ENCODE measurements at regions of chr7 and their contacts with region 1.

Region 1: DNA sequence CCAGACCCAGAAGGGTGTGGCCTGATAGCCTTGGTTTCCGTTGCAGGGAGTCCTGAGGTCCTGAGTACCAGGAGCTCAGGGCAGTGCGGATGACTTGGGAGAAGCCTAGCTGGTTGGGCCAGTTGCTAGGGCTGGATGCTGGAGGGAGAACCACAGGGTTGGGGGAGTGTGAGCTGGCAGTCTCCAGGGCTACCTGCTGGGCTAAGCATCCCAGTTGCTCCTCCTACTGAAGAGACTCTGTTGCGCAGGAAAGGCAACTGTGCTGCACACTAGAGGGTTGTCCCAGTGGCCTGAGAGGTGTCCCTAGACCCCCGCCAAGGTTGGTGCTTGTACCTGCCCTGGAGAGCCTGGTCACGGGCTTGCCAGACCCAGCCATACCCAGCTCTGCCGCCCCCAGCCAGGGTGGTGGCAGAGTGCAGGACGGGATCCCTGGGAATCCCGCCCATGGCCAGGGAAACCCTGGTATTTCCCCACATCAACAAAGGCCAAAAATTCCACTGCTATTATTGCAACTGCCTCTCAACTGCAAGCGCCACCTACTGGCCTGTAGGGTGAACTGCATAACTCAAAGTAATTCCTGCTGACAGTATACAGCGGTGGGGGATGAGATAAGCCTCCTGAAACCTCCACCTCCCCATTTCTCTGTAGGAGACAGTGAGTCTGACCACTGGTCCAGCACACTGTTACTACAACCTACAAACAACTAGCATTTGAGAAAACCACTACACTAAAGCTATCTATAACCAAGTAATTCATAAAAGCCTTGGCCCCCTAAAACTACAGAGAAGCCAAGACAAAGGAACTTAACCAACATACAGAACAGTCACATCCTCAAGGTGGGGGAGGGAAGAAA is 67.6 kb upstream of the DDC start:
- DNase-seq: peak; percentile 74
- H3K4me3 ChIP-seq: no peak overlapping the region; a peak in 1 of 4 replicates
- H3K27ac ChIP-seq: no peak overlapping the region; a peak in 1 of 4 replicates
- H3K4me1 ChIP-seq: peaks cover 0 to 15% of the 10 kb centered on the region in 2 experiments; a peak in 1 of 4 replicates
- H3K27me3 ChIP-seq: no peaks in the 10 kb centered on the region
- CTCF ChIP-seq: peak; percentile 98
- EP300 ChIP-seq: no peak
- RAD21 ChIP-seq: peak; percentile 78

Region 2: DNA sequence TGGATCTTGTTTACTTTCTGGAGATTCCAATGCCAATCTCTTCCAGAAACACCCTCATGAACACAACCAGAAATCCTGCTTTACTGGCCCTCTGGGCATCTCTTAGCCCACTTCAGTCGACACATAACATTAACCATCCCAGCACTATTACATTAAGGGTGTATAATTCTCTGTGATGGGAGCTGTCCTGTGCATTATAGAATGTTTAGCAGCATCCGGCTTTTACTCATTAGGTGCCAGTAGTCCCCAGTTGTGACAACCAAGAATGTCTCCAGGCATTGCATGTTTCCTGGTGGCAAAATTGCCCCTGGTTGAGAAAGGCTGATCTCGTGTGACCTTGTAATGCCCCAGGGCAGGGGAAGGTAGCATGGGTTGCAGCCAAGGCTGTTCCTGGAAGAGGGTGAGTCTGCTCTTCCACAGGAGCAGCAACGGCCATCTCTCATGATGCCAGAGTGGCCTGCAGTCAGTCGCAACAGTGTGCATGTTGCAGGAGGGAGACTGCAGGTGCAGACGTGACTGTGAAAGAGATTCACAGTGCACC is 65.0 kb before region 1 on chr7:
- CTCF ChIA-PET with region 1: interaction called, 10 read pairs
- POLR2A ChIA-PET with region 1: no interaction called
- DNase-seq: peak; percentile 42
- H3K4me3 ChIP-seq: no peak overlapping the region
- H3K27ac ChIP-seq: peak overlapping the region in 1 of 2 experiments; percentile 96; a peak in 2 of 4 replicates
- H3K4me1 ChIP-seq: peaks cover 0 to 41% of the 10 kb centered on the region in 2 experiments; a peak in 2 of 4 replicates
- H3K27me3 ChIP-seq: peaks cover 17% of the 10 kb centered on the region; the same call in 1 of the 2 replicates
- CTCF ChIP-seq: no peak
- EP300 ChIP-seq: peak in 1 of 2 experiments; percentile 80; a peak in 2 of 4 replicates
- RAD21 ChIP-seq: no peak

Region 3: GRCh38 chr7:50595491-50596102 is 37.2 kb before region 1 on chr7:
- CTCF ChIA-PET with region 1: interaction called, 40 read pairs
- POLR2A ChIA-PET with region 1: no interaction called
- DNase-seq: peak; percentile 76
- H3K4me3 ChIP-seq: no peak overlapping the region
- H3K27ac ChIP-seq: no peak overlapping the region
- H3K4me1 ChIP-seq: peaks cover 0 to 19% of the 10 kb centered on the region in 2 experiments; a peak in 1 of 4 replicates
- H3K27me3 ChIP-seq: no peaks in the 10 kb centered on the region
- CTCF ChIP-seq: peak; percentile 73
- EP300 ChIP-seq: no peak
- RAD21 ChIP-seq: peak; percentile 75

Region 4: DNA sequence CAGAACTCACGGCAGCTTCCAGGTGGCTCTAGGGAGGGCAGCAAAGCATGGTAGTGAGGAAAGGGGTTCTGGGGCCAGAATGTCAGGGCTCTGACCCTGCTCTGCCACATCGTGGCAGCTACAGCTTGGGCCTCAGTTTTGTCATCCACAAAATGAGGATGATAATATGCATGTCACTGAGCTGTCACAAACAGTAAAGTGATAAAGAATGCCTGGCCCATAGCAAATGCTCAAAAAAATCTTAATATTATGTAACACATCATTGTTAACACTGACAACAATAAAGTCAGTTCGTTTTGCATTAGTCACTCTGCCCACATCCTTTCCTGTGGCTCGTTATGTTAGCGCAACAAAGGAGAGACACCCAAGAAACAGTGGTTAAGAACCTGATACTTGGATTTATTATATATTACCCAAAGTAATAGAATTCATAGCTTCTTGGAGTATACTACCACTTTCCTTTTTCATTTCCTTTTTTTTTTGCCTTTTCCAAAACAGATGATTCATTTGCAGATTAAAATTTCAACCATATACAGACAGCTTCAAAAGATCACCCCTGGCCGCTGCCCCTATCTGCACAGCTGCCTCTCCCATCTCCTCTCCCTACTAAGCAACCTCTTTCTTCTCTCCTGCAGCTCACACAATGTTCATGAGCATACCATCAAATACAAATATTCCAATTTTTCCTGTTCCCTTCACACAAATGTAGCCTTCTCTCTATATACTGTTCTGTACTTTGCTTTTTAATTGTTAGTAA is 22.1 kb before region 1 on chr7:
- CTCF ChIA-PET with region 1: interaction called, 87 read pairs
- POLR2A ChIA-PET with region 1: no interaction called
- DNase-seq: no peak
- H3K4me3 ChIP-seq: no peak overlapping the region
- H3K27ac ChIP-seq: peak overlapping the region in 1 of 2 experiments; percentile 6; a peak in 2 of 4 replicates
- H3K4me1 ChIP-seq: peaks cover 4 to 13% of the 10 kb centered on the region in 2 experiments; a peak in 1 of 4 replicates
- H3K27me3 ChIP-seq: no peaks in the 10 kb centered on the region
- CTCF ChIP-seq: no peak
- EP300 ChIP-seq: no peak
- RAD21 ChIP-seq: no peak

Region 5: GRCh38 chr7:50620433-50620832 is 12.4 kb before region 1 on chr7:
- CTCF ChIA-PET with region 1: interaction called, 87 read pairs
- POLR2A ChIA-PET with region 1: no interaction called
- DNase-seq: no peak
- H3K4me3 ChIP-seq: no peak overlapping the region
- H3K27ac ChIP-seq: no peak overlapping the region
- H3K4me1 ChIP-seq: peaks cover 0 to 21% of the 10 kb centered on the region in 2 experiments; a peak in 1 of 4 replicates
- H3K27me3 ChIP-seq: no peaks in the 10 kb centered on the region
- CTCF ChIP-seq: no peak
- EP300 ChIP-seq: no peak
- RAD21 ChIP-seq: no peak

Region 6: DNA sequence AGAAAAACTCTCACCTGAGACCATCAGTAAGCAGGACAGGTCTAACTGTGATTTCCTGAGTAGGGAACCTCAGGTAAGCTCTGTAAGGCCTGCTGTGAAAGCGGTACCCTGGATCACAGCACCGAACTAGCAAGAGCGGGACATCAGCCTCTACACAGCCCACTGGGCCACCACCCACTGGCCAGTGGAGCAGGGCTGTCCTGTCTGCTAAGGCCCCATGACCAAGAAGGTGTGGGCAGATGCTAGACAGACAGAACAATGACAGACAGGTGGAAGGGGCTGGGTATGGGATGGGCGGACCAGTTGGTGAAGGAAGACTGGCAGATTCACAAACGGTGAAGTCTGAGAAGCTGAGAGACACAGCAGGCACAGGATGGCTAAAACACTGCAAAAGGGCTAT is 11.8 kb after region 1 on chr7:
- CTCF ChIA-PET with region 1: interaction called, 30 read pairs
- POLR2A ChIA-PET with region 1: no interaction called
- DNase-seq: peak; percentile 22
- H3K4me3 ChIP-seq: no peak overlapping the region
- H3K27ac ChIP-seq: peak overlapping the region in 1 of 2 experiments; percentile 43; a peak in 1 of 4 replicates
- H3K4me1 ChIP-seq: peaks cover 0 to 22% of the 10 kb centered on the region in 2 experiments; a peak in 2 of 4 replicates
- H3K27me3 ChIP-seq: no peaks in the 10 kb centered on the region
- CTCF ChIP-seq: no peak
- EP300 ChIP-seq: no peak
- RAD21 ChIP-seq: no peak

Region 7: GRCh38 chr7:50653126-50653864 is 20.5 kb after region 1 on chr7:
- CTCF ChIA-PET with region 1: interaction called, 14 read pairs
- POLR2A ChIA-PET with region 1: no interaction called
- DNase-seq: no peak
- H3K4me3 ChIP-seq: no peak overlapping the region
- H3K27ac ChIP-seq: no peak overlapping the region
- H3K4me1 ChIP-seq: peaks cover 0 to 12% of the 10 kb centered on the region in 2 experiments; a peak in 1 of 4 replicates
- H3K27me3 ChIP-seq: no peaks in the 10 kb centered on the region
- CTCF ChIP-seq: no peak
- EP300 ChIP-seq: no peak
- RAD21 ChIP-seq: no peak